Spleen (tissue), 13 donors: ENCODE measurements at regions of chr6 and their contacts with region 1.

Region 1: DNA sequence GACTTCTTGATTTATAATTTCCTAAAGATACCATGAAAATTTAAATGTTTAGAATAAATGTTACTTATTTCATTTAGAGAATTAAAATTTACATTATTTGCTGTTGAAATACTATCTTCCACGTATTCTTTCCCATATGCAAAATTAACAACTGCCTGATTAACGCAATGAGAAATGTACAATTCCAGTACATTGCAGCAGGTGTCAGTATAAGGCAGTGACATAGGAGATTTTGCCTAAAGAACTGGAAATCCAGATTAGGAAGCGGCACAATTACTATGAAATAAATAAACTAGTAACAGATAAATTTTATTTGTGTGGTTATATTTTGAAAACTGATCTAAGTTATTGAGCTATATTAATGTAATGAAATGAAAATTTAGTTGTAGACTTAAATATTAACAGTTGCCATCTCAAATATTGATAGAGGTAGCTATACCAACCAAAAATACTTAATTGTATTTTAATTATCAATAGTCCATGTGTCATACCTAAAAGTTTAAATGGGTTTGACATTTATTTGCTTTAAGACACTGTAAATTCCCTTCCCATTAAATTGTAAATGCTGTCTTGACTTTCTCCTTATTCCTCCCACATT is 300.2 kb downstream of the UTRN start:
- DNase-seq: no peak
- H3K4me3 ChIP-seq: no peak overlapping the region
- H3K27ac ChIP-seq: no peak overlapping the region
- H3K4me1 ChIP-seq: peaks cover 16 to 82% (median 37%) of the 10 kb centered on the region in 6 donors
- H3K27me3 ChIP-seq: no peaks in the 10 kb centered on the region
- CTCF ChIP-seq: peak in 10 of 11 experiments; percentile 26 to 64 (median 52)
- POLR2A ChIP-seq: no peak

Region 2: GRCh38 chr6:144411332-144412190 is 173.8 kb before region 1 on chr6:
- intact Hi-C with region 1: no loop called
- DNase-seq: no peak
- H3K4me3 ChIP-seq: no peak overlapping the region
- H3K27ac ChIP-seq: peak overlapping the region in 1 of 8 donors; percentile 9
- H3K4me1 ChIP-seq: peaks cover 12 to 73% (median 43%) of the 10 kb centered on the region in 6 donors
- H3K27me3 ChIP-seq: no peaks in the 10 kb centered on the region
- CTCF ChIP-seq: no peak
- POLR2A ChIP-seq: no peak

Region 3: DNA sequence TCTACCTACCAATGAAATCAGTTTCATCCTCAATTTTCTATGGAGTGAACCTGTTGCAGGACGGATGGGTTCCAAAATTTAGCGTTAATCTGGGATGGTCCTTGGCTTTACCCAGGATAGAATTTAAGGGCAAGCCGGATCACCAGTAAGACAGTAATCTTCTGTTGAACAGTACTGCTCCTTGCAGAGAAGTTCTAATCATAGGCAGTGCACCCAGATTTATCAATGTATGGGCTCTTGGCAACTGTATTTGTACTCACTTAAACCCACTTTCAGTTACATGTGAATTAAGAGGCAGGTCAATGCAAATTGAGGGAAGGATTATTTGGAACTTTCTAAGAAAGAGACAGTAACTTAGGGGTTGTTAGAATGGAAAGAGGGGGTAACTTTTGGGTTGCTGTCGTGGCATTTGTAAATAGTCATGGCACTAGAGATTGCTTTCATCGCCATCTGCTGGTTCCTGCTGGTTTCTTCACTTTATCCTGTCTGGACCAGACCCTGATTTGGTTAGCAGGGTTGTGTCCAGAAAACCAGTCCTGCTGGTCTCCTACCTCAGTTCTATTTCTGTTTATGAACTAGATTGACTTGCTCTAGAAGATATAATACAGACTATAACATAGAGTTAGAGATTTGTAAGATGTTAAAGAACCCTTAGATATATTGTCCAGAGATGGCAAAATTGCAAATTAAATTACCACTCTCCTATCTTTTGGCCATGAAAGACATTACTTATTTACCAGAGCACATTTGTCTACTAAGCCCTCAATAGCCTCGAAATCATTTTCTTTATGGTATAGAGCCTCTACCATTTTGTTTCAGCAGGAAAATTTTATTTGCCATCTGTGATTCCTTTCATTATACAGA is 346.1 kb after region 1 on chr6:
- intact Hi-C with region 1: loop called (anchors 5 kb)
- DNase-seq: no peak
- H3K4me3 ChIP-seq: no peak overlapping the region
- H3K27ac ChIP-seq: no peak overlapping the region
- H3K4me1 ChIP-seq: no peaks in the 10 kb centered on the region
- H3K27me3 ChIP-seq: no peaks in the 10 kb centered on the region
- CTCF ChIP-seq: peak in 10 of 11 experiments; percentile 7 to 63 (median 48)
- POLR2A ChIP-seq: no peak

Region 4: DNA sequence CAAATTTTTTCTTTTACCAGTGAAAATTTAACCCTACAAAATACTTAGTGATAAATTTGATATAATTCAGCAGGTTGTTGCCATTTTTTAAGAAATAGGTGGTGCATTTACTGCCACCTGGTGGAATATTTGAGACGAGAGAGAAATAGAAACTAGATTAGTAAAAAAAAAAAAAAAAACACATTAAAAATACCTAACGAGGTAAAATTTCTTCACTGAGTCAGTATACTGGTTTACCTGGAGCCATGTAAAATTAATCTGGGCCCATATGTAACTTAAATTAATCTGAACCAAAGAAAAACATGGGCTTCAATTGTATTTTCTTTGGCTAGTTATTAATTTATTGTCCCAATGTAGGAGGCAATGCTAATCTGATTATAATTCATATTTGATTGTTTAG is 629.3 kb after region 1 on chr6:
- intact Hi-C with region 1: loop called (anchors 5 kb)
- DNase-seq: no peak
- H3K4me3 ChIP-seq: no peak overlapping the region
- H3K27ac ChIP-seq: no peak overlapping the region
- H3K4me1 ChIP-seq: peaks cover 0 to 3% (median 0%) of the 10 kb centered on the region in 6 donors
- H3K27me3 ChIP-seq: no peaks in the 10 kb centered on the region
- CTCF ChIP-seq: peak in 8 of 11 experiments; percentile 18 to 48 (median 41)
- POLR2A ChIP-seq: no peak